PC-9 (cell line): ENCODE measurements at regions of chr1 and their contacts with region 1.

Region 1: GRCh38 chr1:151839457-151840405 is at the start of gene C2CD4D:
- DNase-seq: peak; percentile 86 to 93
- H3K4me3 ChIP-seq: peak within 1 kb of the TSS; percentile 57
- H3K27ac ChIP-seq: peak within 1 kb of the TSS; percentile 86
- H3K4me1 ChIP-seq: peaks cover 35% of the 10 kb centered on the region
- H3K27me3 ChIP-seq: no peaks in the 10 kb centered on the region
- CTCF ChIP-seq: no peak
- total RNA-seq, gene C2CD4D: 1.4 and 1.5 TPM in 2 replicates

Region 2: DNA sequence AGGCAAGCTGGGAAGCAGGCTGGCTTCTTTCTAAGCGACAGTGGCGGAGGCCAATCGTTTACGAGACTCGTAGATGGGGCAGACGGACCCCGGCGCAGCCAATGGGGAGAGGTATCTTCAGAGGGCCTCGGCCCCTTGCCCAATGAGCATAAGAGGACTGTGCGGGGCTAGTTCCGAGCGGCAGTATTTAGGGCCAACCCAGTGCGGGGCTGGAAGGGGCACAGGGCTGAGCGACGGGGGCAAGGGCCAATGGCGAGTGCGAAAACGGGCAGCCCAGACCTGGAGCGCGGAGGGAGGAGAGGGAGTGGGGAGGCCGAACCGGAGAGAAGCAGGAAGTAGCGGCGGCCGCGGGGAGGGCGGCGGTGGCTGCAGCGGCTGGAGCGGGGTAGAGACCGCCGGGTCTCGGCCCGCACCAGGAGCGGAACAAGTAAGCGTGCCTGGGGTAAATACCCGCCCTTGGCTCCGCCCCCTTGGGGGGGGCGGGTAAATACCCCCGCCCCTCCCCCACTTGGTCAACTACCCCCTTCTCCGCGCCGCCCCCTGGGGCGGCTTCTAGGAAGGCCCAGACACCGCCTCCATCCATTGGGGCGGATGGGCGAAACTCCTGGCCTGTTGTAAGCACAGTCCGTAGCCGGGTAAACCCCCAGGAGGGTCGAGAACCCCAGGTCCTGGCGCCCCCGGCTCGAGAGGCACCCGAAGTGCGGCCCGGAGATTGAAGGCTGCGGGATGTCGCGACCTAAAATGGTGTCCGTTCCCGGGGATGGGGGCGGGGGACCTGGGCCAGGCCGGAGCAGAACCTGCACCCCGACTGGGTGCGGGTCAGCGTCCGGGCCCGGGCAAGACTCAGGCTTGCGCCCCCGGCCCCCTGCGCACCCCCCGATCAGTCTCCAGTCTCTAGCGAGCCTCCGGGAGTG is 557.5 kb before region 1 on chr1 and contains the start of gene ZNF687:
- CTCF ChIA-PET with region 1: no interaction called
- POLR2A ChIA-PET with region 1: no interaction called
- intact Hi-C with region 1: loop called (anchors 10 kb)
- DNase-seq: peak; percentile 99 to 100
- H3K4me3 ChIP-seq: peak within 1 kb of the TSS; percentile 62
- H3K27ac ChIP-seq: peak within 1 kb of the TSS; percentile 90
- H3K4me1 ChIP-seq: peaks cover 13% of the 10 kb centered on the region; the same call in 1 of the 2 replicates
- H3K27me3 ChIP-seq: no peaks in the 10 kb centered on the region
- CTCF ChIP-seq: no peak
- total RNA-seq, gene ZNF687: 26.6 and 28.7 TPM in 2 replicates

Region 3: GRCh38 chr1:151494741-151495281 is 344.9 kb before region 1 on chr1:
- CTCF ChIA-PET with region 1: interaction called, 11 read pairs
- POLR2A ChIA-PET with region 1: interaction called, 22 read pairs
- intact Hi-C with region 1: no loop called
- DNase-seq: peak; percentile 64 to 92
- H3K4me3 ChIP-seq: no peak overlapping the region
- H3K27ac ChIP-seq: peak overlapping the region; percentile 73
- H3K4me1 ChIP-seq: peaks cover 25% of the 10 kb centered on the region
- H3K27me3 ChIP-seq: no peaks in the 10 kb centered on the region
- CTCF ChIP-seq: no peak

Region 4: DNA sequence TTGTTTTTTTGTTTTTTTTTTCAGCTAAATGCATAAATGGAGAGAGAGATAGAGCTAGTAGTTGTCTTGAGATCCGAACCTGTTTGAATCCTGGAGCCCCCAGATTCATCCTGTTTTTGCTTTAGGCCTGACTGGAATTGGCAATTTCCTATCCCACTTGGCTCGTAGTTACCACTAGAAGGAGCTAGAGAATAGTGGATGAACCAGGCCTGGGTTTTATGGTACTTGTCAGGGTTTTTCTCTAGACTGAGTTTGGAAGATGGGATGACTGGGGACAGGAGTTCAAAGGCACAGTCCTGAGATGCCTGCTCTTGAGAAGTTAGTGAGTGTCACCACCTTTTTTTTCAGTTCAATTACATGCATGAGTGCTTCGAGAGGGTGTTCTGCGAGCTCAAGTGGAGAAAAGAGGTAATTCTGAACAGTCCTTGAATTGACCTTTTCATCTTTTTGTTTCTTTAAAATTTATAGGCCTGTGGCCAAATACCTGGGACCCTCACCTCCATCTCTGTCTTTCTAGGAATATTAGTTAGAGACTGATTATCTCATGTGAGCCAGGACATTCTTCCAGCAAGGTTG is 146.6 kb before region 1 on chr1:
- CTCF ChIA-PET with region 1: interaction called, 4 read pairs
- POLR2A ChIA-PET with region 1: no interaction called
- intact Hi-C with region 1: loop called (anchors 1 kb)
- DNase-seq: no peak
- H3K4me3 ChIP-seq: no peak overlapping the region
- H3K27ac ChIP-seq: no peak overlapping the region
- H3K4me1 ChIP-seq: no peaks in the 10 kb centered on the region
- H3K27me3 ChIP-seq: no peaks in the 10 kb centered on the region
- CTCF ChIP-seq: peak; percentile 72

Region 5: GRCh38 chr1:151909150-151910149 is 69.7 kb after region 1 on chr1 and contains the start of gene THEM4:
- CTCF ChIA-PET with region 1: no interaction called
- POLR2A ChIA-PET with region 1: interaction called, 6 read pairs
- intact Hi-C with region 1: loop called (anchors 2 kb)
- DNase-seq: peak; percentile 87 to 98
- H3K4me3 ChIP-seq: peak within 1 kb of the TSS; percentile 78
- H3K27ac ChIP-seq: peak within 1 kb of the TSS; percentile 84
- H3K4me1 ChIP-seq: peaks cover 30% of the 10 kb centered on the region
- H3K27me3 ChIP-seq: no peaks in the 10 kb centered on the region
- CTCF ChIP-seq: no peak
- total RNA-seq, gene THEM4: 24.1 and 41.4 TPM in 2 replicates